ENCODE measurements at regions of chr5 and their contacts with region 1.

Region 1: GRCh38 chr5:147223948-147224791 is 10.7 kb upstream of the STK32A start:
- DNase-seq: peak; percentile 42
- ATAC-seq: peak; percentile 84; the same call in 1 of the 2 replicates
- H3K4me3 ChIP-seq: no peak overlapping the region
- H3K27ac ChIP-seq: no peak overlapping the region
- H3K4me1 ChIP-seq: no peaks in the 10 kb centered on the region
- H3K27me3 ChIP-seq: no peaks in the 10 kb centered on the region; the same call in 1 of the 2 replicates
- CTCF ChIP-seq: peak; percentile 75
- POLR2A ChIP-seq: no peak
- RAD21 ChIP-seq: peak; percentile 84

Region 2: DNA sequence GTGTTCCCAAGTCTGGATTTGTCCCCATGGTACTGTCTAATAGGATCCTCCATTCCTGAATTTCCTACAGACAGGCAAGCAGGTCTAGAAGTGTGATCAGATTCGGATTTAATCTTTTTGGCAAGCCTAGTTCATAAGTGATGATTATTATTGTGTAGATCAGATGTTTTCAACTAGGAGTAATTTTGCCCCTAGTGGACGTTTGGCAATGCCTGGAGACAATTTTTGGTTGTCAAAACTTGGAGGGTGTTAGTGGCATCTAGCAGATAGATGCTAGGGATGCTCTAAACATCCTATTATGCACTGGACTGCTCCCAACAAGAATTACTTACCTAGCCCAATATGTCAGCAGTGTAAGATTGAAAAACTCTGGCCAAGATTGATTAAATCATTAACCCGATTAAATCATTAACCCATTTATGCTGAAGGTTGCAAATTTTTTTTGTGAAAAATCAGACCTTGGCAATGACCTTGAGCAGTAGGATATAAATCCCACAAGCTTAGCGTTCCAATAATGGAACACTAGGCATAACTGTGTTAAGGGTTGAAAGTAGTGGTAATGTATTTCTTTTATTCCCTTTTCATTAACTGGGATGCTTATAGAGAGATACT is 748.9 kb before region 1 on chr5:
- CTCF ChIA-PET with region 1: no interaction called
- POLR2A ChIA-PET with region 1: no interaction called
- dilution Hi-C with region 1: no loop called
- in situ Hi-C with region 1: no loop called
- intact Hi-C with region 1: no loop called
- DNase-seq: no peak
- ATAC-seq: no peak
- H3K4me3 ChIP-seq: no peak overlapping the region
- H3K27ac ChIP-seq: no peak overlapping the region
- H3K4me1 ChIP-seq: no peaks in the 10 kb centered on the region
- H3K27me3 ChIP-seq: no peaks in the 10 kb centered on the region
- CTCF ChIP-seq: 0 out of 2 replicates have a peak, but pooled peaks have one; percentile 16
- POLR2A ChIP-seq: no peak
- RAD21 ChIP-seq: no peak

Region 3: GRCh38 chr5:146924132-146924531 is 300.0 kb before region 1 on chr5:
- CTCF ChIA-PET with region 1: no interaction called
- POLR2A ChIA-PET with region 1: no interaction called
- dilution Hi-C with region 1: no loop called
- in situ Hi-C with region 1: no loop called
- intact Hi-C with region 1: no loop called
- DNase-seq: no peak
- ATAC-seq: no peak
- H3K4me3 ChIP-seq: no peak overlapping the region
- H3K27ac ChIP-seq: no peak overlapping the region
- H3K4me1 ChIP-seq: no peaks in the 10 kb centered on the region
- H3K27me3 ChIP-seq: no peaks in the 10 kb centered on the region
- CTCF ChIP-seq: no peak
- POLR2A ChIP-seq: no peak
- RAD21 ChIP-seq: no peak

Region 4: DNA sequence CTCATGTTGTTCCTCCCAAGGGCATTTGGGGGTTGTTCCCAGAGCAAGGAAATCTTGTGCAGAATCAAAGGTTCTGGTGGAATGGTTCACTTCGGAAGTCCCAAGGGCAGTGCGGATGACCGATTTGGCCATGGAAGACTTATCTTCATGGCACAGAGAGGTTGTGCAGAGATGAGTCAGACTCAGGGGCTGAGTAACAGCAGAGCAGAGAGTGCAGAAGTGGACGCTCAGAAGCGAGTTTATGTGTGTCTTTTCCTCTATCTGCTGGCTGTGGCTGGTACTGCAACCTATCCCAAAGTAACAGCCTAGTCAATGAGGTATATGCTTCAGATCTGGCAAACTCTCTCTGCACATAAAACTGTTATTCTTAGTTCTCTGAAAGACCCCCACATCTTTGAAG is 167.6 kb after region 1 on chr5:
- CTCF ChIA-PET with region 1: interaction called, 4 read pairs
- POLR2A ChIA-PET with region 1: no interaction called
- dilution Hi-C with region 1: no loop called
- in situ Hi-C with region 1: no loop called
- intact Hi-C with region 1: loop called (anchors 2 kb)
- DNase-seq: peak; percentile 84
- ATAC-seq: peak; percentile 97
- H3K4me3 ChIP-seq: no peak overlapping the region
- H3K27ac ChIP-seq: no peak overlapping the region
- H3K4me1 ChIP-seq: peaks cover 3% of the 10 kb centered on the region; the same call in 1 of the 2 replicates
- H3K27me3 ChIP-seq: no peaks in the 10 kb centered on the region
- CTCF ChIP-seq: peak; percentile 65
- POLR2A ChIP-seq: no peak
- RAD21 ChIP-seq: peak; percentile 66

Region 5: GRCh38 chr5:147509710-147510651 is 285.8 kb after region 1 on chr5 and contains the start of gene DPYSL3:
- CTCF ChIA-PET with region 1: no interaction called
- POLR2A ChIA-PET with region 1: no interaction called
- dilution Hi-C with region 1: no loop called
- in situ Hi-C with region 1: no loop called
- intact Hi-C with region 1: loop called (anchors 1 kb)
- DNase-seq: peak; percentile 78
- ATAC-seq: peak; percentile 89
- H3K4me3 ChIP-seq: peak within 1 kb of the TSS; percentile 56
- H3K27ac ChIP-seq: peak within 1 kb of the TSS; percentile 79
- H3K4me1 ChIP-seq: peaks cover 5% of the 10 kb centered on the region
- H3K27me3 ChIP-seq: no peaks in the 10 kb centered on the region
- CTCF ChIP-seq: peak; percentile 42
- POLR2A ChIP-seq: peak; percentile 70
- RAD21 ChIP-seq: peak; percentile 58
- total RNA-seq, gene DPYSL3: 46.1 and 50.2 TPM in 2 replicates

Region 6: DNA sequence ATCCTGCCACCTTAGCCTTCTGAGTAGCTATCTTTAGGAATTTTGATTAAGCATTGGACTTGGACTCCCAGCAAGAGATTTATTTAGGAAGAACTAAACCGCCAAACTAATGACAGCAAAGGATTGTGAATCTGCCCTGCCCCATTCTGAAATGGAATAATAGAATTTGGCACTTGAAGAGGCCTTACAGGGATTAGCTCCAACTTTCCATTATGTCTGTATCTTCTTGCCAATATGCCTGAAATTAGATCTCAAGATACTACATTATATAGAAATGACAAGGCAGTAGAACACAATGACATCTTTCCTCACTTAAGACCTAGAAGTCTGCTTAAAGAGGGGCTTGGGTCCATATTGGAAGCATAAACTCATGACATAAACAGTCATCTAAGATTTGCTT is 362.7 kb after region 1 on chr5:
- CTCF ChIA-PET with region 1: interaction called, 3 read pairs
- POLR2A ChIA-PET with region 1: no interaction called
- dilution Hi-C with region 1: no loop called
- in situ Hi-C with region 1: loop called (anchors 10 kb)
- intact Hi-C with region 1: no loop called
- DNase-seq: no peak
- ATAC-seq: no peak
- H3K4me3 ChIP-seq: no peak overlapping the region
- H3K27ac ChIP-seq: no peak overlapping the region
- H3K4me1 ChIP-seq: no peaks in the 10 kb centered on the region
- H3K27me3 ChIP-seq: peaks cover 2% of the 10 kb centered on the region; the same call in 1 of the 2 replicates
- CTCF ChIP-seq: no peak
- POLR2A ChIP-seq: no peak
- RAD21 ChIP-seq: no peak

Measured in IMR-90 (cell line).